GM10248 (cell line): ENCODE measurements at regions of chr10 and their contacts with region 1.

Region 1: DNA sequence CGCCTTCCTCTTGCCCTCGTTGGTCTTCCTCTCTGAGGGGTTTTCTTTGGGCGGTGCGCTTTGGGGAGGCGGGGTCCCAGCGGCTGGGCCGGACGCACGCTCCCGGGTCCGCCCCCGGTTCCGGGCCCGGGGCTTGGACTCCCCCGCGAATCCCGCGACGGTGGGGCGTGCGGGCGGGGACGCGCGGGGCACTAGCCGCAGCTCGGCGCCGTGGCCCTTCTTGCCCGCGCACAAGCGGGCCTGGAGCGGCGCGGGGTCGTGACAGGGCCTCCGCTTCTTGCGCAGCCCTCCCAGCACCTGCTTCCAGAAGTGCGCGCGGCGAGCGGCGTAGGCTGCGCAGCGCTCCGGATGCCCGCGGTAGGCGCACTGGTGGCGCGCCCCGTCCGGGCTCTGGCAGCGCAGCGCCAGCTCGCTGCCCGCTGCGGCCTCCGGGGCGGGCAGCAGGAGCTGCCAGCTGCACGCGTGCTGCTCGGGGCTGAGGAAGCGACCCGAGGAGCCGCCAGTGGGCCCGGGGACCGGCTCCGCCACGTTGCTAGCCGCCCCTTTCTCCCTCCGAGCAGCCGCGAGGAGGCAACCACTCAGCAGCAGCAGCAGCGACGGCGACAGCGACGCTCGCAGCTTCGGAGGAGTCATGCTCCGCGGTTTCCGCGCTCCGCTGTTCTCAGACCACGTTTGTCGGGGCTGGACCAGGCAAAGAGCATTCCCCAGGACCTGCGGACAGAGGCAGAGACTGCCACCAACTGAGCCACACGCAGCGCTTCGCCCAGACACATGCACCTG is 759 bp downstream of the FGFBP3 start:
- DNase-seq: peak; percentile 86
- CTCF ChIP-seq: peak; percentile 72

Region 2: DNA sequence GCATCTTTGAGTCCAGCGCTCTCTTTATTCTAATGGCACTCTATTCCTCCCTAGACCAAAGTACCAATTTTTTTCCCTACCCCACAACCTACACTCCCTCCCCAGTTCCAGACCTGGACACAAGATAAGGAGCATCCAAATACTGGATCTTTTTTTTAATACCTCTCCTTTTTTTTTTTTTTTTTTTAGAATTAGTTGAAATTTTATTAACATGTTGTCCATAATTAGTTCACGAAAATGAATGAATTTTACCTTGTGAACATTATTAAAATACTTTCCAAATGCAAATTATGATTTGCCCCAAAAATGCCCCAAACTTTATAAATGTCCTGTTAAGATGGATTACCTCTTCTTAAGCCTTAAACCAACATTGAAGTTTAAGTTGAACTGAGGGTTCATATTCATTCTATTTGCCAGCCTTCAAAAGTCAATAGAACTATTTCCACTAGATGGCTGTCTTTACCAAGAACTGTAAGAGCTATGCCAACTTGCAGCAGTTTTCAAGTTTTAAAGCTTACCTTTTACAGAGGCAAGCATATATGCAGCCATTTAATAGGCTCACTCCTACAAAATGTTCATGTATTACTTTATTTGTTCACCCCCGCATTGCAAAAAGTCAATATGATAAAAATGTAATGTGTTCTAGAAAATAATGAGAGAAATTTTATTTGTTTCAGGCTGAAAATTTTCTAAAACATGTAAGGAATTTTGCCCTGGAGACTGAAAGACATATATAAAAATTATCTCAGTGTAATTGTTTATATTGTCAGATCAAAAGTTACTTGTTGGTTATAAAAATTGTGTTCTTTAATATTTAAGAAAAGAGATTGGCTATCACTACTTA is 150.0 kb before region 1 on chr10:
- CTCF ChIA-PET with region 1: interaction called, 19 read pairs
- POLR2A ChIA-PET with region 1: no interaction called
- DNase-seq: peak; percentile 25
- CTCF ChIP-seq: peak; percentile 43

Region 3: GRCh38 chr10:91887272-91888076 is 21.1 kb before region 1 on chr10:
- CTCF ChIA-PET with region 1: no interaction called
- POLR2A ChIA-PET with region 1: no interaction called
- DNase-seq: peak; percentile 54
- CTCF ChIP-seq: no peak

Region 4: GRCh38 chr10:91923371-91924211 is 15.1 kb after region 1 on chr10 and contains the start of gene BTAF1:
- CTCF ChIA-PET with region 1: interaction called, 14 read pairs
- POLR2A ChIA-PET with region 1: interaction called, 6 read pairs
- DNase-seq: peak; percentile 91
- CTCF ChIP-seq: no peak

Region 5: GRCh38 chr10:92024700-92025099 is 116.2 kb after region 1 on chr10:
- CTCF ChIA-PET with region 1: no interaction called
- POLR2A ChIA-PET with region 1: no interaction called
- DNase-seq: no peak
- CTCF ChIP-seq: no peak